A673 (cell line): ENCODE measurements at regions of chr6 and their contacts with region 1.

Region 1: DNA sequence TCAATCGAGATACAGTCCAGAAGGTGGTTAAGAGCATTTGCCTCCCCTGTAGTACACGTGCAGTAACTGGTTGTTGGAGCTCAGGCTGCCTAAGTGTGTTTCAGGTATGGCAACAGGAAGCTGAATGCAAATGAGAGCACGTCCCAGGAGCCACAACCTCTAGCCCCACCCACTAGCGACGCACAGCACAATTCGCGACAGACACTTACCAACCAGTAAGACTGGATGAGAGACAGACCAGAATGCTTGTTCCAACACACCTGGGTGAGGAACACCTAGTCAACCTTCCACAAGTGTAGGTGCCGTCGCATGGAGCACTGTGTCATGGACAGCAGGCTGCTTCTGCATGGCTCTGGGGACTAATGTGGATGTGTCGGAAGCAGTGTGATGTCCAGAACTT is 7.2 kb upstream of the SERPINB1 start:
- DNase-seq: no peak
- H3K4me3 ChIP-seq: no peak overlapping the region
- H3K27ac ChIP-seq: no peak overlapping the region
- H3K4me1 ChIP-seq: peaks cover 14% of the 10 kb centered on the region
- H3K27me3 ChIP-seq: no peaks in the 10 kb centered on the region
- CTCF ChIP-seq: no peak

Region 2: GRCh38 chr6:2738373-2738979 is 110.4 kb before region 1 on chr6:
- CTCF ChIA-PET with region 1: interaction called, 4 read pairs
- POLR2A ChIA-PET with region 1: no interaction called
- intact Hi-C with region 1: loop called (anchors 1 kb)
- DNase-seq: peak; percentile 88
- H3K4me3 ChIP-seq: no peak overlapping the region
- H3K27ac ChIP-seq: no peak overlapping the region
- H3K4me1 ChIP-seq: no peaks in the 10 kb centered on the region
- H3K27me3 ChIP-seq: no peaks in the 10 kb centered on the region
- CTCF ChIP-seq: peak; percentile 91

Region 3: DNA sequence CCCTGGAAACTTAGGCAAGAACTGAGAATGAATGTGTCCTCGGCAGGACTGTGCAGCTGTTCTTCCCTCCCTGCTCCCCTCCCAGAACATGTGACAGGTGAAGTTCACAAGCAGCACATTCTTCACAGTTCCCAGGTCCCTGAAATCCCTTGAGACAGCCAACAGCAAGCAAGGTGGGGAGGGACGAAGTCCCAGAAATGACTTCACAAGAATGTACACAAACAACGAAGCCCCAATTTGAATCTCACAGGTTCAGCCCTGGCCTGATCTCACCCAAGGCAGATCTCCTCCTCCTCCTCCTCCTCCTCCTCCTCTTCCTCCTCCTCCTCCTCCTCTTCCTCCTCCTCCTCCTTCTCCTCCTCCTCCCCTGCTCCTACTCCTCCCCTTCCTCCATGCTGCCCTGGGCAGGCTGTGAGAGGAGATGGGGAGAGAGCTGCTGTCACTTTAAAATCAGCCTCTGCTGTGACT is 51.3 kb before region 1 on chr6:
- CTCF ChIA-PET with region 1: interaction called, 9 read pairs
- POLR2A ChIA-PET with region 1: interaction called, 10 read pairs
- intact Hi-C with region 1: loop called (anchors 2 kb)
- DNase-seq: no peak
- H3K4me3 ChIP-seq: no peak overlapping the region
- H3K27ac ChIP-seq: peak overlapping the region; percentile 78
- H3K4me1 ChIP-seq: peaks cover 39% of the 10 kb centered on the region
- H3K27me3 ChIP-seq: no peaks in the 10 kb centered on the region
- CTCF ChIP-seq: no peak

Region 4: DNA sequence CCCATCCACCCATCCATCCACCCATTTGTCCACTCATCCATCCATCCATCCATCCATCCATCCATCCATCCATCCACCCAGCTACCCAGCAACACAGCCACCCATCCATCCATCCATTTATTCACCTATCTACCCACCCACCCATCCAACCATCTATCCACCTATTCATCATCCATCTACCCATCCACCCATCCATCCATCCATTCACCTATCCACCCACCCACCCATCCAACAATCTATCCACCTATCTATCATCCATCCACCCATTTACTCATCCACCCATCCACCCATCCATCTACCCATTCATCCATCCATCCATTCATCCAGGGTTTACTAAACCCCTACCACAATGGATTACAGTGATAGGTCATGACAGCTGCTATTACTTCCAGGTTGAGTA is 14.6 kb before region 1 on chr6:
- CTCF ChIA-PET with region 1: no interaction called
- POLR2A ChIA-PET with region 1: no interaction called
- intact Hi-C with region 1: no loop called
- DNase-seq: no peak
- H3K4me3 ChIP-seq: no peak overlapping the region
- H3K27ac ChIP-seq: no peak overlapping the region
- H3K4me1 ChIP-seq: peaks cover 12% of the 10 kb centered on the region
- H3K27me3 ChIP-seq: no peaks in the 10 kb centered on the region
- CTCF ChIP-seq: no peak

Region 5: GRCh38 chr6:2931970-2932748 is 83.3 kb after region 1 on chr6:
- CTCF ChIA-PET with region 1: interaction called, 20 read pairs
- POLR2A ChIA-PET with region 1: no interaction called
- intact Hi-C with region 1: loop called (anchors 1 kb)
- DNase-seq: peak; percentile 88
- H3K4me3 ChIP-seq: no peak overlapping the region
- H3K27ac ChIP-seq: no peak overlapping the region
- H3K4me1 ChIP-seq: no peaks in the 10 kb centered on the region
- H3K27me3 ChIP-seq: no peaks in the 10 kb centered on the region
- CTCF ChIP-seq: peak; percentile 98

Region 6: GRCh38 chr6:2988426-2989331 is 139.8 kb after region 1 on chr6:
- CTCF ChIA-PET with region 1: interaction called, 9 read pairs
- POLR2A ChIA-PET with region 1: interaction called, 3 read pairs
- intact Hi-C with region 1: loop called (anchors 5 kb)
- DNase-seq: peak; percentile 93
- H3K4me3 ChIP-seq: peak overlapping the region; percentile 56
- H3K27ac ChIP-seq: peak overlapping the region; percentile 97
- H3K4me1 ChIP-seq: peaks cover 12% of the 10 kb centered on the region
- H3K27me3 ChIP-seq: no peaks in the 10 kb centered on the region
- CTCF ChIP-seq: peak; percentile 60